Adrenal gland (tissue), 19 donors: ENCODE measurements at regions of chr10 and their contacts with region 1.

Region 1: GRCh38 chr10:45672181-45673073 is at the start of gene ZFAND4:
- DNase-seq: peak; percentile 97 to 99 (median 99)
- H3K4me3 ChIP-seq: peak within 1 kb of the TSS; percentile 47 to 77 (median 65)
- H3K27ac ChIP-seq: peak within 1 kb of the TSS; percentile 56 to 92 (median 90)
- H3K4me1 ChIP-seq: peaks cover 0 to 6% of the 10 kb centered on the region in 2 donors
- H3K27me3 ChIP-seq: no peaks in the 10 kb centered on the region
- CTCF ChIP-seq: peak; percentile 8 to 96 (median 65)
- POLR2A ChIP-seq: peak; percentile 67 to 82
- total RNA-seq, gene ZFAND4: 11.0 to 48.7 (median 31.4) TPM

Region 2: GRCh38 chr10:44818701-44819127 is 853.7 kb before region 1 on chr10:
- intact Hi-C with region 1: no loop called
- DNase-seq: no peak
- H3K4me3 ChIP-seq: no peak overlapping the region
- H3K27ac ChIP-seq: no peak overlapping the region
- H3K4me1 ChIP-seq: no peaks in the 10 kb centered on the region
- H3K27me3 ChIP-seq: peaks cover 8% of the 10 kb centered on the region
- CTCF ChIP-seq: no peak
- POLR2A ChIP-seq: no peak

Region 3: DNA sequence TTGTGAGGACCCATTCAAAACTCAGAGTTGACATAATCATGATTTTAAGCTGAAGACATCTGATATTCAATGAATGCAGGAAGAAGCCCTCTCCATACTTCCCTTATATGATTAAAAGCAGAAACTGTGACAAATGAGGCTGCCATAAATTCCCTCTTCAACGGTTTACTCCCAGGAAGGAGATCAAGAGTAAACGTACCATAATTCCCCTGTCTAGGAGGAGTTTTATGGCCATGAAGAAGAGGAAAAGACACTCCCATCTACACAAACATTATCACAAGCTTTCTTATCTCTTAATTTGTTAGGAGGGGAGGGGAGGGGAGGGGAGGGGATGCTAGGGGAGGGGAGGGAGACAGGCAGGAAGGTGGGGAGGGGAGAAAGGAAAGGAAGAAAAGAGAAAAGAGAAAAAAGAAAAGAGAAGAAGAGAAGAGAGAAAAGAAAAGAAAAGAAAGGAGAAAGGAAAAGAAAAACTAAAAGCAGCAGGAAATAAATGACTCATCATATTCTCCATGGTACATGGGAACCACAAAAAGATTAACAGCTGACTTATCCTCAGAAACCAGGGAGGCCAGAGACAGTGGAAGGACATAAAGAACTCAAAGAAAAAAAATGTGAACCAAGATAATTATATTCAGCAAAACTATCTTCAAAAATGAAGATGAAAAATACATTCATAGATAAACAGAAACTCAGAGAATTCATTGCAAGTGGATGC is 176.8 kb before region 1 on chr10:
- intact Hi-C with region 1: no loop called
- DNase-seq: no peak
- H3K4me3 ChIP-seq: no peak overlapping the region
- H3K27ac ChIP-seq: no peak overlapping the region
- H3K4me1 ChIP-seq: no peaks in the 10 kb centered on the region
- H3K27me3 ChIP-seq: no peaks in the 10 kb centered on the region
- CTCF ChIP-seq: no peak
- POLR2A ChIP-seq: no peak

Region 4: DNA sequence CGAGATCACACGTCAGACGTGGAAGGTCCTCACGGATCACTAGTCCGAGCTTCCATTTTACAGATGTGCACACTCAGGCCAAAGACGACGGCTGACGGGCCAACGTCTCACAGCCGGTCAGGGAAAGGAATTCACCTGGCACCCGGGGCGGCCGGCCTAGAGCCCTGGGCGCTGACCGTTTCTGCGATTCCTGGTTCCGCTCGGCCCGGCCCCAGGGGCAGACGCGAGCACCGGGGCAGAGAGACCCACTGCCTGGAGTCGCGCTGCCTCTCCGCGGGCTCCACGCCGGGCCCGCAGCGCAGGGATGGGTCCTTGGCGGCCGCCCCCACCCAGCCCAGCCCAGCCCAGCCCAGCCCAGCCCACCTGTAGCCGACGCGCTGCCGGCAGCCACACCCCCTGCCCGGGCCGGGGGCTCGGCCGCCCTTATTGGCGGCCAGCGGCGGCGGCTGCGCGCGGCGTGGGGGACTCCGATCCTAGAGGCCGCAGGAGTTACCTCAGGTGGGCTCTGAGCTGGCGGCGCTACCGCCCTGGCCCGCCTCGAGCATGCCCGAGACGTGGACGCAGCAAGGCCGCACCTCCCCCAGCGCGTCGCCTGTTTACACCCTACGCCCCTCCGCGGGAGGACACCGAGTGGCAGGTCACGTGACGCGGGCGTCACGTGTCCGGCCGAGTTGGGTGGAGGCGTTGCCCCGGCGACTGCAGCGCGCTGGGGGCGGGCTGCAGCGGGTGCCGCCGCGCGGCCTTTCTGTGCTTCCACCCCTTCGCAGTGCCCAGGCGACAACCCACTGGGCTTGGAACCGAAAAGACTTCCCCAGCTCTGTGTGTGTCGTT is 77.9 kb before region 1 on chr10:
- intact Hi-C with region 1: loop called in 1 of 2 experiments (anchors 5 kb)
- DNase-seq: peak; percentile 94 to 96 (median 95)
- H3K4me3 ChIP-seq: peak overlapping the region in 3 of 4 donors; percentile 30 to 95 (median 71)
- H3K27ac ChIP-seq: peak overlapping the region in 4 of 5 donors; percentile 32 to 92 (median 78)
- H3K4me1 ChIP-seq: peaks cover 9 to 30% of the 10 kb centered on the region in 2 donors
- H3K27me3 ChIP-seq: no peaks in the 10 kb centered on the region
- CTCF ChIP-seq: no peak
- POLR2A ChIP-seq: peak; percentile 34 to 79